HepG2 (cell line): ENCODE measurements at regions of chr10 and their contacts with region 1.

Region 1: GRCh38 chr10:34213193-34213804 is 601.8 kb downstream of the PARD3 start:
- DNase-seq: peak; percentile 98
- ATAC-seq: peak; percentile 96
- H3K4me3 ChIP-seq: no peak overlapping the region
- H3K27ac ChIP-seq: peak overlapping the region; percentile 60
- H3K4me1 ChIP-seq: peaks cover 71% of the 10 kb centered on the region
- H3K27me3 ChIP-seq: no peaks in the 10 kb centered on the region
- CTCF ChIP-seq: peak; percentile 56
- EP300 ChIP-seq: peak; percentile 52 to 98; a peak in 3 of 4 replicates
- POLR2A ChIP-seq: no peak
- RAD21 ChIP-seq: peak; percentile 45; the same call in 1 of the 2 replicates

Region 2: DNA sequence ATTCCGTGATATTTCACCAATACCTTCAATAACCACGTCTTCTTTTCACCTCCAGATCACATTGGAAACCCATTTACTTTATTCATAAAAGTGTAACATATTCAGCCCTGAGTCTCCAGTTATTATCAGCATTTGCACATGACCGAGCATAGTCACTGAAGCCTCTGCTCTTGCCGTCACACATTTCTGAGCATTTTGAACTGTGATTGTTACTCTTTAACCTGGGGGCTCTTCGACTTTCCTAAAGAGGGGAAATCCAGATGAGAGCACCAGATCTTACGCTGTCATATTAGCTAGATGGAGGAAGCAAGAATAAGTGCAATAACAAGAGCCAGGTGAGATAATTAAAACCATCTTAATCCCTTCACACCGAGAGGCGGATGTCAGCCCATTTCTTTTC is 618.8 kb before region 1 on chr10:
- CTCF ChIA-PET with region 1: no interaction called
- POLR2A ChIA-PET with region 1: no interaction called
- in situ Hi-C with region 1: no loop called
- intact Hi-C with region 1: no loop called
- DNase-seq: no peak
- ATAC-seq: no peak
- H3K4me3 ChIP-seq: no peak overlapping the region
- H3K27ac ChIP-seq: no peak overlapping the region
- H3K4me1 ChIP-seq: no peaks in the 10 kb centered on the region
- H3K27me3 ChIP-seq: peaks cover 0 to 18% of the 10 kb centered on the region in 2 experiments; a peak in 1 of 5 replicates
- CTCF ChIP-seq: no peak
- EP300 ChIP-seq: no peak
- POLR2A ChIP-seq: no peak
- RAD21 ChIP-seq: no peak

Region 3: GRCh38 chr10:34121781-34122628 is 91.3 kb before region 1 on chr10:
- CTCF ChIA-PET with region 1: no interaction called
- POLR2A ChIA-PET with region 1: no interaction called
- in situ Hi-C with region 1: no loop called
- intact Hi-C with region 1: loop called (anchors 2 kb)
- DNase-seq: peak; percentile 71
- ATAC-seq: peak; percentile 73
- H3K4me3 ChIP-seq: peak overlapping the region; percentile 3 to 44 (median 24); a peak in 2 of 6 replicates
- H3K27ac ChIP-seq: peak overlapping the region; percentile 90
- H3K4me1 ChIP-seq: peaks cover 68% of the 10 kb centered on the region
- H3K27me3 ChIP-seq: no peaks in the 10 kb centered on the region
- CTCF ChIP-seq: no peak
- EP300 ChIP-seq: no peak
- POLR2A ChIP-seq: no peak
- RAD21 ChIP-seq: no peak

Region 4: GRCh38 chr10:34184939-34185386 is 28.3 kb before region 1 on chr10:
- CTCF ChIA-PET with region 1: no interaction called
- POLR2A ChIA-PET with region 1: no interaction called
- in situ Hi-C with region 1: no loop called
- intact Hi-C with region 1: loop called (anchors 2 kb)
- DNase-seq: peak; percentile 87
- ATAC-seq: peak; percentile 80
- H3K4me3 ChIP-seq: no peak overlapping the region
- H3K27ac ChIP-seq: peak overlapping the region; percentile 61
- H3K4me1 ChIP-seq: peaks cover 60% of the 10 kb centered on the region
- H3K27me3 ChIP-seq: no peaks in the 10 kb centered on the region
- CTCF ChIP-seq: no peak
- EP300 ChIP-seq: peak in 1 of 2 experiments; percentile 80; a peak in 2 of 4 replicates
- POLR2A ChIP-seq: no peak
- RAD21 ChIP-seq: no peak

Region 5: DNA sequence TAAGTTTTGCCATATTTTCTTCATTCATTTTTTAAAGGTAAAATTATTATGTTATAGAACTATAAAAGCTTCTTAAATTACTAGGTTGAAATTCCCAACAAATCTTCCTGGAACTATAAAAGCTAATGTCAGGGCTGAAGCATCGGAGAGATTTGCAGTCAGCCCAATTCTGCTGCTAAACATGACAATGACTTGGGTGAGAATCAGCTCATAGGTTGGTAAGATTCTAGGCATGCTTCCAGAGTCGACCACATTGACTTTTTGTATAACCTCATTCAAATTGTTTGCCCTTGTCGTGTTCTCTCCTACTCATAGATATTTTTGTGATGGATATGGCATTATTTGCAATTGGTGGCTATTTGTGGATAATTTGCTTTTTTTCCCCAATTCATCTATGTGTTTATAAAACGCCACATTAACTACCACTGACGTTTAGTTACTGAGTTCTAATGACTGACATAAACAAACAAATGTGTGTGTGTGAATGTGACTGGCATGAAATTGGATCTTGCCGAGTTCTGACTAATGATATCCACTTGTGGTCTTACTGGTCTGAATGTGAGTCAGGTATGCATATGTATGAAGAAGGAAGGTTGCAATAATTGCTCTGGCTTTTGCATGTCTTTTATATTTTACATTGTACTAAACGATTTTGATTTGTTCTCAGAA is 22.0 kb after region 1 on chr10:
- CTCF ChIA-PET with region 1: no interaction called
- POLR2A ChIA-PET with region 1: no interaction called
- in situ Hi-C with region 1: no loop called
- intact Hi-C with region 1: loop called (anchors 2 kb)
- DNase-seq: no peak
- ATAC-seq: no peak
- H3K4me3 ChIP-seq: no peak overlapping the region
- H3K27ac ChIP-seq: no peak overlapping the region
- H3K4me1 ChIP-seq: peaks cover 42% of the 10 kb centered on the region
- H3K27me3 ChIP-seq: no peaks in the 10 kb centered on the region
- CTCF ChIP-seq: no peak
- EP300 ChIP-seq: no peak
- POLR2A ChIP-seq: no peak
- RAD21 ChIP-seq: no peak

Region 6: GRCh38 chr10:34262985-34263384 is 49.7 kb after region 1 on chr10:
- CTCF ChIA-PET with region 1: no interaction called
- POLR2A ChIA-PET with region 1: no interaction called
- in situ Hi-C with region 1: no loop called
- intact Hi-C with region 1: no loop called
- DNase-seq: peak; percentile 8
- ATAC-seq: no peak
- H3K4me3 ChIP-seq: no peak overlapping the region
- H3K27ac ChIP-seq: no peak overlapping the region
- H3K4me1 ChIP-seq: no peaks in the 10 kb centered on the region
- H3K27me3 ChIP-seq: no peaks in the 10 kb centered on the region
- CTCF ChIP-seq: no peak; the same call in 1 of the 2 replicates
- EP300 ChIP-seq: no peak
- POLR2A ChIP-seq: no peak
- RAD21 ChIP-seq: no peak

Region 7: DNA sequence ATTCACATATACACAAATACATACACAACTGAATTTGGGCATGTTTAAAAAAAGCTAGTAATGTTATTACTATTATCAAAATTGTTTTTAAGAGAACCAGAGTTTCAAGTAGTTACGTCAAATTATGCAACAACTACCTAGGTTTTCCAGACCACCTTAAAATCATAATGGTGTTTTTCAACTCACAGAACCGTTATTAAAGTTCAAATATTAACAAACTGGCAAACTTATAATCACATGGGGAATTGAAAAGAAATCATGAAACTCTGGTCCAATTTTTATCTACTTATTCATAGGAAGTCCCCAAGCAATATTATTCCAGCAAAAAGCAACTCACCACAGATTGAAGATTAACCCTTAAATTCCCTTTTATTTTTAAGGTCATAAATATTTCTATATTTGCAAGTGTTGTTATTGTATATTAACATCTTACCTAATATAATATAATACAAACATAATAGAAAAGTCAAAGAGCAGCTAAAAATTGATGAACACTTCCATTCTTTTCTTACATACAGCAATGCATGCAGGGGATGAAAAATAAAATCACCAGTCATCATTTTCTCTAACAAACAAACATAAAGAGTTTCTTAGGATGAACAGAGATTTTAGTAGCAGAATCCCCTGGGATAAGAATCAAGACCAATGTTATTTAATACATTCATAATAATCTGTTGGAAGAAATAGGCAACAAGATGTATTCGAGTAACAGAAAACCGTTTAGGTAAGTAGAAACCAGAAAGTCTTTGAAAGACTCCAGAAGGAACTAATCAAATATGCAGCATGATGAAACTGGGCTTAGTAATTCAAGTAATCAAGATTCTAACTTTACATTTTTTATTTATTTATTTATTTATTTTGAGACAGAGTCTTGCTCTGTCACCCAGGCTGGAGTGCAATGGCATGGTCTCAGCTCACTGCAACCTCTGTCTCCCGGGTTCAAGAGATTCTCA is 210.7 kb after region 1 on chr10:
- CTCF ChIA-PET with region 1: no interaction called
- POLR2A ChIA-PET with region 1: no interaction called
- in situ Hi-C with region 1: no loop called
- intact Hi-C with region 1: no loop called
- DNase-seq: no peak
- ATAC-seq: no peak
- H3K4me3 ChIP-seq: no peak overlapping the region
- H3K27ac ChIP-seq: no peak overlapping the region
- H3K4me1 ChIP-seq: peaks cover 31% of the 10 kb centered on the region
- H3K27me3 ChIP-seq: no peaks in the 10 kb centered on the region
- CTCF ChIP-seq: no peak
- EP300 ChIP-seq: no peak
- POLR2A ChIP-seq: no peak
- RAD21 ChIP-seq: no peak